CD4-positive, alpha-beta memory T cell (primary cell): ENCODE measurements at regions of chr4 and their contacts with region 1.

Region 1: GRCh38 chr4:26867914-26868684 is 7.5 kb downstream of the STIM2 start:
- DNase-seq: no peak
- H3K4me3 ChIP-seq: no peak overlapping the region
- H3K4me3 Mint-ChIP-seq: peak overlapping the region in 6 of 8 donors; percentile 7 to 67 (median 59)
- H3K27ac ChIP-seq: no peak overlapping the region
- H3K27ac Mint-ChIP-seq: peak overlapping the region in 6 of 7 donors; percentile 37 to 85 (median 64)
- H3K4me1 ChIP-seq: peaks cover 86% of the 10 kb centered on the region
- H3K4me1 Mint-ChIP-seq: peaks cover 63 to 88% (median 76%) of the 10 kb centered on the region in 4 donors
- H3K27me3 ChIP-seq: no peaks in the 10 kb centered on the region
- H3K27me3 Mint-ChIP-seq: no peaks in the 10 kb centered on the region

Region 2: DNA sequence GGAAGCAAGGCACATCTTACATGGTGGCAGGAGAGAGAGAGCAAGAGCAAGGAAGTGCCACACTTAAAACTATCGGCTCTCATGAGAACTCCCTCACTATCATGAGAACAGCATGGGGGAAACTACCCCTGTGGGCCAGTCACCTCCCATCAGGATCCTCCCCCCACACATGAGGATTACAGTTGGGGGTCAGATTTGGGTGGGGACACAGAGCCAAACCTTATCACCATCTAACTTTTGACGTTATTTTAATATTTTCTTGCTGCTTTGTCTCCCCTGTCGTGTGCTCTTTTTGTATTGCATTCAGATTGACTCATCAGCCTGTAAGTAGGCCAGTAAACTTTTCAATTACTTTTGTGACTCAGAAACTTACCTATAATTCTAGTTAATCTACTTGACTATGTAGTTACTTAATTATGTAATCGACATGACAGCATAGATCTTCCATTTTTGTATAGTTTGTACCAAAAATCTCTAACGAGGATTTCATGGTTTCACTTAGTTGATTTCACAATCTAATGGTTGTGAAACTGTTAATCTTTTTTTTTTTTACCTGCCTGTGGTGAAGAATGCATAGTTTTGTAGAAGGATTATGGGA is 10.8 kb after region 1 on chr4:
- CTCF ChIA-PET with region 1: interaction called, 10 read pairs
- POLR2A ChIA-PET with region 1: interaction called, 74 read pairs
- intact Hi-C with region 1: no loop called
- DNase-seq: peak in 3 of 5 donors; percentile 23 to 75 (median 28)
- H3K4me3 ChIP-seq: peak overlapping the region in 1 of 2 donors; percentile 25
- H3K4me3 Mint-ChIP-seq: peak overlapping the region; percentile 22 to 87 (median 75)
- H3K27ac ChIP-seq: peak overlapping the region; percentile 56
- H3K27ac Mint-ChIP-seq: peak overlapping the region; percentile 90 to 98 (median 96)
- H3K4me1 ChIP-seq: peaks cover 88% of the 10 kb centered on the region
- H3K4me1 Mint-ChIP-seq: peaks cover 64 to 81% (median 70%) of the 10 kb centered on the region in 4 donors
- H3K27me3 ChIP-seq: no peaks in the 10 kb centered on the region
- H3K27me3 Mint-ChIP-seq: no peaks in the 10 kb centered on the region

Region 3: GRCh38 chr4:27397886-27398285 is 529.8 kb after region 1 on chr4:
- CTCF ChIA-PET with region 1: no interaction called
- POLR2A ChIA-PET with region 1: no interaction called
- intact Hi-C with region 1: no loop called
- DNase-seq: no peak
- H3K4me3 ChIP-seq: no peak overlapping the region
- H3K4me3 Mint-ChIP-seq: no peak overlapping the region
- H3K27ac ChIP-seq: no peak overlapping the region
- H3K27ac Mint-ChIP-seq: no peak overlapping the region
- H3K4me1 ChIP-seq: no peaks in the 10 kb centered on the region
- H3K4me1 Mint-ChIP-seq: no peaks in the 10 kb centered on the region
- H3K27me3 ChIP-seq: no peaks in the 10 kb centered on the region
- H3K27me3 Mint-ChIP-seq: no peaks in the 10 kb centered on the region